ENCODE measurements at regions of chr12 and their contacts with region 1.

Region 1: GRCh38 chr12:113424915-113425823 is 3.0 kb downstream of the SDSL start:
- DNase-seq: peak; percentile 73
- CTCF ChIP-seq: peak; percentile 69

Region 2: DNA sequence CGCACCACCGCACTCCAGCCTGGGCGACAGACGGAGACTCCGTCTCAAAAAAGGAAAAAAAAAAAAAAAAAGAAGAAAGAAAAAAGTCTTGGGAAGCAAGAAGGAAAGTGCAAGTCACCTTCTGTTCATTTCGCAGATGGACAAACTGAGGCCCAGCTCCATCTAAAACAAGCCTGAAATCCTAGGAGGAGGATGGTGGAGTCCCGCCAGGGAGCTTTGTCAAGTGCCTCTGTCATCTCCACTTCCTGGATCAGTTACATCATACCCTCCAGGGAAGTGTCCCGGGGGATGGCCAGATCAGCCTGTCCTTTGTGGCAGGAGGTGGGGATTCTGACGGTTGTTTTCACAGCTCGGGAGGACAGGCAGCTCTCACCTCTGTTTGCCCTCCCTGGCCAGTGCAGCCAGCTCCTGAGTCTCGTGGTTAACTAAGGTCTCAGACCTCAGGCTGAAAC is 11.7 kb before region 1 on chr12:
- CTCF ChIA-PET with region 1: interaction called, 18 read pairs
- POLR2A ChIA-PET with region 1: no interaction called
- DNase-seq: no peak
- CTCF ChIP-seq: no peak